ENCODE measurements at regions of chr3 and their contacts with region 1.

Region 1: DNA sequence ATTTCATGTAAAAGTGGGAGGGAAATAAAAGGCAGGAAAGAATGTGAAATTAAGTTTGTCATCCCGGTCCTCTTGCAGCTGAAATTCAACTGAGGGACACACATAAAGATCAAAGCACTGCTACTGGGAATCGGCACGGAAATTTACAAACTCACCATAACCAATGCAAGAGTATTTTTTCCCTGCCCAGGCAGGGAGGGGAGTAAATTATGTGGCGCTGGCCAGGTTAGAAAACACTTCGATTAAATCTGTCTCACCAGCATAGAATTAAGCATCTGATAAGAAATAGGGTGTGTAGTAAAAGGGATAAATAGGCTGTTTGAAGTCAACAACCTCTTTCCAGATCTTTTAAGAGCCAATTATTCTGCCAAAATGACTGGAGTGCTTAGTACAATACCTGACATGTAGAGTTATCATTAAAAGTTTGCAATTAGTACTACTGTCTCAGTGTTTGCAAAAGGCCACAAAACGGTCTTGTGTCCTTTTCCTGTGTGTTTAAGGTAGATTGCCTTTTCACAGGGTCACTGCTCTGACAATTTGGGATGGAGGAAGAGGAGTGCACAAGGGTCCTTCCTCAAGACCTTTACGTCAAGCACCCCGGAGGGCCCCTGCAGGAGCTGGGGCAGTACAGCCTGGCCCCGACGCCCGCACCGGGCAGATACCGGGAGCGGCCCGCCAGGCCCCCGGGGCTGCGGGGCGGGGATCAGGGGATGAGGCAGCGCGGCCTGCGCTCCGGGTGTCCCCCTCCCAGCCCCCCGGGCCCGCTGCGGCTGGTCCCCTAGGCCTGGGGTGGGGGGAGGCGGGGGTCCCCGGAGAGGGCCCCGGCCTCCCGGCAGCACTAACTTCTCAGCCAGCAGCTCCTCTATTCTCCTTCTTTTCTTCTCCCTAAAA is 651 bp downstream of the UBA3 start:
- DNase-seq: peak in 2 of 9 donors; percentile 19 to 53
- ATAC-seq: no peak
- H3K4me3 ChIP-seq: peak overlapping the region; percentile 65
- H3K4me3 Mint-ChIP-seq: peak overlapping the region; percentile 81 to 93 (median 91)
- H3K27ac ChIP-seq: peak overlapping the region; percentile 76
- H3K27ac Mint-ChIP-seq: peak overlapping the region; percentile 81 to 99 (median 88)
- H3K4me1 ChIP-seq: peaks cover 59 to 64% of the 10 kb centered on the region in 2 donors
- H3K4me1 Mint-ChIP-seq: peaks cover 54 to 74% (median 69%) of the 10 kb centered on the region in 7 donors
- H3K27me3 ChIP-seq: no peaks in the 10 kb centered on the region
- H3K27me3 Mint-ChIP-seq: no peaks in the 10 kb centered on the region

Region 2: DNA sequence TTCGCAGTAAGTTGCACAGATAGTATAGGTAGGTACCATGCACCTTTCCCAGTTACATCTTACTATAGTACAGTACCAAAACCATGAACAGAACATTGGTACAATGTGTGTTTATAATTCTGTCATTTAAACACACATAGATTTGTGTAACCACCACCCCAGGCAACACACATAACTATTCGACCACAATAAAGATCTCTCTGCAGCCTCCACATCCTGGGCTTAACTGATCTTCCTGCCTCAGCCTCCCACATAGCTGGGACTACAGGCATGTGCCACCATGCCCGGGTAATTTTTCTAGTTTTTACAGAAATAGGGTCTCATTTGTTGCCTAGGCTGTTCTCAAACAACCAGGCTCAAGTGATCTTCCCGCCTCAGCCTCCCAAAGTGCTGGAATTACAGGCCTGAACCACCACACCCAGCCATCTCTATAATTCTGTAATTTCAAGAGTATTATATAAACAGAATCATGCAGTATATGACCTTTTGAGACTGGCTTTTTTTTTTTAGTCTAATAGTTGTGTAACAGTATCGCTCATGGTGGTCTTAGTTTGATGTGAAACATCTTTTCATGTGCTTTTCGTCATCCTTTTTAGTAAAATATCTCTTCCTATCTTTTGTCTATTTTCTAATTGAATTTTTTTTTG is 14.1 kb before region 1 on chr3:
- CTCF ChIA-PET with region 1: interaction called, 3 read pairs
- POLR2A ChIA-PET with region 1: interaction called, 12 read pairs
- intact Hi-C with region 1: loop called in 1 of 2 experiments (anchors 1 kb)
- DNase-seq: peak in 5 of 9 donors; percentile 22 to 37 (median 27)
- ATAC-seq: peak; percentile 66
- H3K4me3 ChIP-seq: no peak overlapping the region
- H3K4me3 Mint-ChIP-seq: peak overlapping the region in 9 of 10 donors; percentile 11 to 81 (median 53)
- H3K27ac ChIP-seq: peak overlapping the region; percentile 5
- H3K27ac Mint-ChIP-seq: peak overlapping the region; percentile 57 to 91 (median 83)
- H3K4me1 ChIP-seq: peaks cover 22 to 25% of the 10 kb centered on the region in 2 donors
- H3K4me1 Mint-ChIP-seq: peaks cover 21 to 55% (median 42%) of the 10 kb centered on the region in 7 donors
- H3K27me3 ChIP-seq: no peaks in the 10 kb centered on the region
- H3K27me3 Mint-ChIP-seq: no peaks in the 10 kb centered on the region

Region 3: GRCh38 chr3:69092030-69092516 is 12.6 kb after region 1 on chr3:
- CTCF ChIA-PET with region 1: interaction called, 3 read pairs
- POLR2A ChIA-PET with region 1: interaction called, 96 read pairs
- intact Hi-C with region 1: loop called (anchors 1 kb)
- DNase-seq: peak in 7 of 9 donors; percentile 46 to 67 (median 60)
- ATAC-seq: peak; percentile 77
- H3K4me3 ChIP-seq: peak overlapping the region; percentile 40
- H3K4me3 Mint-ChIP-seq: peak overlapping the region; percentile 70 to 94 (median 79)
- H3K27ac ChIP-seq: peak overlapping the region; percentile 76
- H3K27ac Mint-ChIP-seq: peak overlapping the region; percentile 90 to 98 (median 93)
- H3K4me1 ChIP-seq: peaks cover 77 to 83% of the 10 kb centered on the region in 2 donors
- H3K4me1 Mint-ChIP-seq: peaks cover 62 to 93% (median 85%) of the 10 kb centered on the region in 7 donors
- H3K27me3 ChIP-seq: no peaks in the 10 kb centered on the region
- H3K27me3 Mint-ChIP-seq: no peaks in the 10 kb centered on the region

Region 4: GRCh38 chr3:69189487-69189886 is 110.0 kb after region 1 on chr3:
- CTCF ChIA-PET with region 1: no interaction called
- POLR2A ChIA-PET with region 1: no interaction called
- intact Hi-C with region 1: no loop called
- DNase-seq: no peak
- ATAC-seq: no peak
- H3K4me3 ChIP-seq: no peak overlapping the region
- H3K4me3 Mint-ChIP-seq: no peak overlapping the region
- H3K27ac ChIP-seq: no peak overlapping the region
- H3K27ac Mint-ChIP-seq: no peak overlapping the region
- H3K4me1 ChIP-seq: no peaks in the 10 kb centered on the region
- H3K4me1 Mint-ChIP-seq: peaks cover 0 to 19% (median 0%) of the 10 kb centered on the region in 7 donors
- H3K27me3 ChIP-seq: no peaks in the 10 kb centered on the region
- H3K27me3 Mint-ChIP-seq: no peaks in the 10 kb centered on the region

Measured in naive thymus-derived CD4-positive, alpha-beta T cell (primary cell).